Breast epithelium (tissue), 4 donors: ENCODE measurements at regions of chrX and their contacts with region 1.

Region 1: GRCh38 chrX:105781804-105782203 is 40.5 kb upstream of the NRK start:
- DNase-seq: no peak
- H3K4me3 ChIP-seq: no peak overlapping the region
- H3K27ac ChIP-seq: no peak overlapping the region
- H3K4me1 ChIP-seq: no peaks in the 10 kb centered on the region
- H3K27me3 ChIP-seq: peaks cover 0 to 47% of the 10 kb centered on the region in 2 donors
- CTCF ChIP-seq: no peak
- POLR2A ChIP-seq: no peak

Region 2: GRCh38 chrX:105765693-105766092 is 16.1 kb before region 1 on chrX:
- intact Hi-C with region 1: loop called (anchors 2 kb)
- DNase-seq: no peak
- H3K4me3 ChIP-seq: no peak overlapping the region
- H3K27ac ChIP-seq: no peak overlapping the region
- H3K4me1 ChIP-seq: no peaks in the 10 kb centered on the region
- H3K27me3 ChIP-seq: peaks cover 0 to 40% of the 10 kb centered on the region in 2 donors
- CTCF ChIP-seq: no peak
- POLR2A ChIP-seq: no peak